ENCODE measurements at regions of chr3 and their contacts with region 1.

Region 1: DNA sequence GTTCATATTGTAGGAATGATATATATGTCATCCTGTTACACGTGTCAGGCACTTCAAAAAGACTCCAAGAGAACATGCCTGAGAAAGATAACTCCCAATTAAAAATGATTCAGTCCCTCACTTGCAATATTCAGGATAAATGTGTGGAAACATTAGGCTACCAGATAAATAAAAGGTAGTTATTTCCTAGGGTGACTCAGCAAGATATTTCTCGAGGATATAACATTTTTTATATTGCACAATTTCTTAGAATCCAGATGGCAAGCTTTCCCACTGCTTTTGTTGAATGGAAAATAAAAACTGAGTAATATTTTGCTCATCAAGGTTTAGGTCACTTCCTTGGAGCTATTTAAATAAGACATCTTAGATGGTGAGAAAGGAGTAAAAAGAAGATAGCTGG is 181.4 kb downstream of the GAP43 start:
- DNase-seq: no peak
- ATAC-seq: no peak
- H3K4me3 ChIP-seq: no peak overlapping the region
- H3K4me3 Mint-ChIP-seq: no peak overlapping the region
- H3K27ac ChIP-seq: no peak overlapping the region
- H3K27ac Mint-ChIP-seq: no peak overlapping the region
- H3K4me1 ChIP-seq: no peaks in the 10 kb centered on the region
- H3K4me1 Mint-ChIP-seq: no peaks in the 10 kb centered on the region
- H3K27me3 ChIP-seq: peaks cover 0 to 13% (median 4%) of the 10 kb centered on the region in 4 experiments
- H3K27me3 Mint-ChIP-seq: peaks cover 54% of the 10 kb centered on the region
- CTCF ChIP-seq: no peak

Region 2: GRCh38 chr3:115766587-115767480 is 37.9 kb before region 1 on chr3:
- CTCF ChIA-PET with region 1: no interaction called
- POLR2A ChIA-PET with region 1: no interaction called
- intact Hi-C with region 1: no loop called
- DNase-seq: no peak
- ATAC-seq: no peak
- H3K4me3 ChIP-seq: no peak overlapping the region
- H3K4me3 Mint-ChIP-seq: no peak overlapping the region
- H3K27ac ChIP-seq: no peak overlapping the region
- H3K27ac Mint-ChIP-seq: no peak overlapping the region
- H3K4me1 ChIP-seq: no peaks in the 10 kb centered on the region
- H3K4me1 Mint-ChIP-seq: no peaks in the 10 kb centered on the region
- H3K27me3 ChIP-seq: peaks cover 0 to 3% (median 0%) of the 10 kb centered on the region in 4 experiments
- H3K27me3 Mint-ChIP-seq: peaks cover 18% of the 10 kb centered on the region
- CTCF ChIP-seq: no peak

Region 3: GRCh38 chr3:115819785-115820384 is 15.2 kb after region 1 on chr3:
- CTCF ChIA-PET with region 1: interaction called, 16 read pairs
- POLR2A ChIA-PET with region 1: no interaction called
- intact Hi-C with region 1: no loop called
- DNase-seq: peak; percentile 84
- ATAC-seq: peak; percentile 90
- H3K4me3 ChIP-seq: no peak overlapping the region
- H3K4me3 Mint-ChIP-seq: no peak overlapping the region
- H3K27ac ChIP-seq: no peak overlapping the region
- H3K27ac Mint-ChIP-seq: no peak overlapping the region
- H3K4me1 ChIP-seq: no peaks in the 10 kb centered on the region
- H3K4me1 Mint-ChIP-seq: no peaks in the 10 kb centered on the region
- H3K27me3 ChIP-seq: no peaks in the 10 kb centered on the region
- H3K27me3 Mint-ChIP-seq: no peaks in the 10 kb centered on the region
- CTCF ChIP-seq: peak; percentile 99